ENCODE measurements at regions of chr16 and their contacts with region 1.

Region 1: DNA sequence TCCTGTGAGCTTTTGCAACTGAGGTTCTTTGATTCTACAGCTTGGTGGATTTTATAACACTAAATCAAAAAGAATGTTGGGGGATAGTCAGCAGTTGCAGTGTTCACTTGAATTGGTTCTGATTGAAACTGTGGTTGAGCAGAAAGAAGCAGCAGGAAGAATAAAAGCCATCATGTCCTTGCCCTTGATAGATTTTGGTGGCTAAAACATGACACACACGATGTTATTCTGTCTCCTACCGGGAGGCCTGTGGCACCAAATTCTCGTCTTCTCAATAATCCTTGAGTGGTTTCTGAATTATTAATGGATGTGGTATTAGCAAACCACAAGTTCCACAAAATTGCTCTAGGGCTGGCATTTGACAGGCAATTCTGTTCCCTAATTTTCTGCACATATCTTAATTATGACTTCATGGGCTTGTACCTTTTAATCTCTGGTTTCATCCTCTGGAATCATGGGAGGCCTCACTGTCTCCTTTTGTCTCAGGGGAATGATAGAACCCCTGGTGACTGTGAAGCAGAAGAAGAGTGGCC is 338.2 kb downstream of the SNX29 start:
- DNase-seq: no peak
- ATAC-seq: no peak
- H3K4me3 ChIP-seq: no peak overlapping the region
- H3K4me3 Mint-ChIP-seq: no peak overlapping the region
- H3K27ac ChIP-seq: no peak overlapping the region
- H3K27ac Mint-ChIP-seq: peak overlapping the region; percentile 62
- H3K4me1 ChIP-seq: no peaks in the 10 kb centered on the region
- H3K4me1 Mint-ChIP-seq: peaks cover 2% of the 10 kb centered on the region
- H3K27me3 ChIP-seq: no peaks in the 10 kb centered on the region
- H3K27me3 Mint-ChIP-seq: no peaks in the 10 kb centered on the region
- CTCF ChIP-seq: no peak

Region 2: GRCh38 chr16:11896777-11897176 is 417.9 kb before region 1 on chr16:
- CTCF ChIA-PET with region 1: no interaction called
- POLR2A ChIA-PET with region 1: no interaction called
- intact Hi-C with region 1: no loop called
- DNase-seq: no peak
- ATAC-seq: no peak
- H3K4me3 ChIP-seq: no peak overlapping the region
- H3K4me3 Mint-ChIP-seq: no peak overlapping the region
- H3K27ac ChIP-seq: no peak overlapping the region
- H3K27ac Mint-ChIP-seq: peak overlapping the region; percentile 9
- H3K4me1 ChIP-seq: peaks cover 25% of the 10 kb centered on the region
- H3K4me1 Mint-ChIP-seq: peaks cover 46% of the 10 kb centered on the region
- H3K27me3 ChIP-seq: no peaks in the 10 kb centered on the region
- H3K27me3 Mint-ChIP-seq: no peaks in the 10 kb centered on the region
- CTCF ChIP-seq: no peak

Region 3: GRCh38 chr16:12260647-12261262 is 54.0 kb before region 1 on chr16:
- CTCF ChIA-PET with region 1: no interaction called
- POLR2A ChIA-PET with region 1: no interaction called
- intact Hi-C with region 1: no loop called
- DNase-seq: no peak
- ATAC-seq: no peak
- H3K4me3 ChIP-seq: no peak overlapping the region
- H3K4me3 Mint-ChIP-seq: no peak overlapping the region
- H3K27ac ChIP-seq: no peak overlapping the region
- H3K27ac Mint-ChIP-seq: no peak overlapping the region
- H3K4me1 ChIP-seq: no peaks in the 10 kb centered on the region
- H3K4me1 Mint-ChIP-seq: peaks cover 3% of the 10 kb centered on the region
- H3K27me3 ChIP-seq: no peaks in the 10 kb centered on the region
- H3K27me3 Mint-ChIP-seq: no peaks in the 10 kb centered on the region
- CTCF ChIP-seq: no peak

Region 4: GRCh38 chr16:12289175-12290063 is 25.3 kb before region 1 on chr16:
- CTCF ChIA-PET with region 1: no interaction called
- POLR2A ChIA-PET with region 1: no interaction called
- intact Hi-C with region 1: no loop called
- DNase-seq: no peak
- ATAC-seq: no peak
- H3K4me3 ChIP-seq: no peak overlapping the region
- H3K4me3 Mint-ChIP-seq: no peak overlapping the region
- H3K27ac ChIP-seq: no peak overlapping the region
- H3K27ac Mint-ChIP-seq: no peak overlapping the region
- H3K4me1 ChIP-seq: no peaks in the 10 kb centered on the region
- H3K4me1 Mint-ChIP-seq: no peaks in the 10 kb centered on the region
- H3K27me3 ChIP-seq: no peaks in the 10 kb centered on the region
- H3K27me3 Mint-ChIP-seq: no peaks in the 10 kb centered on the region
- CTCF ChIP-seq: no peak

Region 5: GRCh38 chr16:12332167-12332952 is 17.6 kb after region 1 on chr16:
- CTCF ChIA-PET with region 1: no interaction called
- POLR2A ChIA-PET with region 1: no interaction called
- intact Hi-C with region 1: loop called in 1 of 2 experiments (anchors 1 kb)
- DNase-seq: no peak
- ATAC-seq: no peak
- H3K4me3 ChIP-seq: no peak overlapping the region
- H3K4me3 Mint-ChIP-seq: no peak overlapping the region
- H3K27ac ChIP-seq: no peak overlapping the region
- H3K27ac Mint-ChIP-seq: no peak overlapping the region
- H3K4me1 ChIP-seq: peaks cover 8% of the 10 kb centered on the region
- H3K4me1 Mint-ChIP-seq: peaks cover 22% of the 10 kb centered on the region
- H3K27me3 ChIP-seq: no peaks in the 10 kb centered on the region
- H3K27me3 Mint-ChIP-seq: no peaks in the 10 kb centered on the region
- CTCF ChIP-seq: no peak

Region 6: DNA sequence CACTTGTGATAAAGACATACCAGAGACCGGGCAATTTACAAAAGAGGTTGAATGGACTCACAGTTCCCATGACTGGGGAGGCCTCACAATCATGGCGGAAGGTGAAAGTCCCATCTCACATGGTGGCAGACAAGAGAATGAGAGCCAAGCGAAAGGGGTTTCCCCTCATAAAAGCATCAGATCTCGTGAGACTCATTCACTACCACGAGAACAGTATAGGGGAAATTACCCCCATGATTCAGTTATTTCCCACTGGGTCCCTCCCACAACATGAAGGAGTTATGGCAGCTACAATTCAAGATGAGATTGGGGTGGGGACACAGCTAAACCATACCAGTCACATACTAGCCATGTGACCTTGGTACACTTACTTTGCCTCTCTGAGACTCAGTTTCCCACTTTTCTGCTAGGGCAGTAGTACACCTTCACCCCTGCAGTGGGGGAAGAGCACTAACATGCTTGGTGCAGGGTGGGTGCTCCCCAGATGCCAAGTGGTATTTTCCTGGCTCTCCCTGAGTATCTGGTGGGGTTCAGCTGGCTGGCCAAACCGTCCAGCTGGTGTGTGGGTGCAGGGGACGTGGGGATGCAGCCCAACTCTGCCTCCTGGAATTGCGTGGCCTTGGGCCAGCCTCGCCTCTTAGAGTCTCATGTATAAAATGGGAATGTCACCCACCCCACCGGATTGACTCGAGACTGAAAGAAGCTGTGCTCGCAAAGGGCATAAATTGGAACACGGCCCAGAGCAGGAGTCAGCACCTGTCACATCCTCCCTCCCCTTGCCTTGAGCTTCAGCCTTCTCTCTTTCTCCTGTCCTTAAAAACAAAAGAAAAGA is 124.9 kb after region 1 on chr16:
- CTCF ChIA-PET with region 1: no interaction called
- POLR2A ChIA-PET with region 1: no interaction called
- intact Hi-C with region 1: no loop called
- DNase-seq: no peak
- ATAC-seq: no peak
- H3K4me3 ChIP-seq: no peak overlapping the region
- H3K4me3 Mint-ChIP-seq: no peak overlapping the region
- H3K27ac ChIP-seq: no peak overlapping the region
- H3K27ac Mint-ChIP-seq: no peak overlapping the region
- H3K4me1 ChIP-seq: no peaks in the 10 kb centered on the region
- H3K4me1 Mint-ChIP-seq: no peaks in the 10 kb centered on the region
- H3K27me3 ChIP-seq: no peaks in the 10 kb centered on the region
- H3K27me3 Mint-ChIP-seq: no peaks in the 10 kb centered on the region
- CTCF ChIP-seq: no peak

Measured in CD8-positive, alpha-beta T cell (primary cell).